GM10248 (cell line): ENCODE measurements at regions of chr11 and their contacts with region 1.

Region 1: GRCh38 chr11:6377902-6378639 is 12.2 kb upstream of the SMPD1 start:
- DNase-seq: no peak
- CTCF ChIP-seq: no peak

Region 2: DNA sequence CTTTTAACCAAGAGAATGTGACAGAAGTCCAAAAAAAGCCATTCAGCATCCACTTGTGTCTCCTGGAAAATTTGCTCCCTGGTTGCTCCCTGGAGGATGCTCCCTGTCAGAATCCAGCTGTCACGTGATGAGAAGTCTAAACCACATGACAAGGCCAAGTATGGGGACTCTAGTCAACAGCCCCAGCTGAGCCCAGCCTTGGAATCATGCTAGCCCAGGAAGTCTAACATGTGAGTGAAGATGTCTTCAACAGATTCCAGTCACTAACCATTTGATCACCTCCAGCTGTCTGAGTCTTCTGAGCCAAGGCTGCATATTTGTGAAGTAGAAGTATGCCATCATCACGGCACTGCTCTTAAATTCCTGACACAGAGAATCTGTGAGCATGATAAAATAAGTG is 266.4 kb before region 1 on chr11:
- CTCF ChIA-PET with region 1: no interaction called
- POLR2A ChIA-PET with region 1: no interaction called
- DNase-seq: no peak
- CTCF ChIP-seq: no peak

Region 3: GRCh38 chr11:6362873-6363678 is 15.0 kb before region 1 on chr11:
- CTCF ChIA-PET with region 1: interaction called, 87 read pairs
- POLR2A ChIA-PET with region 1: no interaction called
- DNase-seq: peak; percentile 78
- CTCF ChIP-seq: peak; percentile 86

Region 4: DNA sequence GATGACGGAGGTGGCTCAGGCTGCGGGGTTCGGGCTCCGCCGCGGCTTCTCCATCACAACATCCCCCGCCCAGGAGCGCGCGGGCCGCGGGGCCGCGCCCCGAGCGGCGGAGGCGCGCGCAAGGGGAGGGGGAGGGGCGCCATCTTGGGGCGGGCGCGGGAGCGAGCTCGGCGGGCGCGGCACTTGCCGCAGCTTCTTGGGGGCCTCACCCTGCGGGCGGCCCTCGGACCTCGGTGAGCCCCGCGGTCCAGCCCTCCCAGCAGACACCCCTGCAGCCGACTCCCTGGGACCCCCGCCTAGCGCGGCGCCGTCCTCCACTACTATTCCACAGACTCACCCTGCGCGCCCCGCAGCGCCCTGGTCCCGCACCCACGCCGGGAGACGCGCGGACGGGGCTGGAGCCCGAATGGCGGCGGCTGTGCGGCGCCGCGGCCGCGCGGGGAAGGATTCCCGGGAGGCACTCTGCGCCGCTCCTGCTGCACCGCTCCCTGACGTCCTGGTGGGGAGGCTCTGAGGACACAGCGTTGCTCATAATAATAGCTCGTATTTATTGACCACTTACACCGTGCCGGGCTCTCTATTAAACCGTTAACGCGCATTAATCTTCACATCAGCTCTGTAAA is 41.0 kb after region 1 on chr11 and contains the start of gene APBB1:
- CTCF ChIA-PET with region 1: interaction called, 25 read pairs
- POLR2A ChIA-PET with region 1: no interaction called
- DNase-seq: peak; percentile 76
- CTCF ChIP-seq: no peak

Region 5: DNA sequence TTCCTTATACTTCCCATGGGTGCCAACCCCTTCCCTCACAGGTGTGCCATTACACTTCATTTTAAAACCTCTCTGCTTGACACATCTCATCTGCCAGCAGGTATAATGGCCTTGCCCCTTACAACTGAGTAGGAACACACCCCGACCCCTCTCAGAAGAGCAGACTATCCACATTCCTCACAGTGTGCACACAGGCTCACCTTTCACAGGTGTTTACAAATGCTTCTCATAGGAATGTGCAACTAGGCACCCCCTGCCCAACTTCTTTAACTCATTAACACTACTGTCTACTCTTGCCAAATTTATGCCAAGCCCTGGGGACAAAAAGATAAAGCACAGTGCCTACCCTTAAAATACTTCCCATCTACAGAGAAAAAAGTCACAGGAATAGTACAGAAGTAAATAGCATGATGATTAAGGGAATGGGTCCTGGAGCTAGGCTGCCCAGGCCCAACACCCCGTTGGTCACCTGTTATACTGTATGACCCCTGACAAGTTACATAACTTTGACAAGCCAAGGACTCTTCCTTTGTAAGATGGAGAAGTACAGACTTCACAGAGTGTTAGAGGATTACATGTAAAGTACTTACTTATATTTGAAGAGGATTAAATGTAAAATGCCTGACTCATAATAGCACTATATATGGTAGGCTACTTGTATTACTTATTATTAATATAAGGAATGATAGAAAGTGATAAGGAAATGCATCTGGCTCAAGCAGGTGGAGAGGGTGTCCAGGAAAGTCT is 80.5 kb after region 1 on chr11:
- CTCF ChIA-PET with region 1: interaction called, 16 read pairs
- POLR2A ChIA-PET with region 1: no interaction called
- DNase-seq: no peak
- CTCF ChIP-seq: no peak

Region 6: DNA sequence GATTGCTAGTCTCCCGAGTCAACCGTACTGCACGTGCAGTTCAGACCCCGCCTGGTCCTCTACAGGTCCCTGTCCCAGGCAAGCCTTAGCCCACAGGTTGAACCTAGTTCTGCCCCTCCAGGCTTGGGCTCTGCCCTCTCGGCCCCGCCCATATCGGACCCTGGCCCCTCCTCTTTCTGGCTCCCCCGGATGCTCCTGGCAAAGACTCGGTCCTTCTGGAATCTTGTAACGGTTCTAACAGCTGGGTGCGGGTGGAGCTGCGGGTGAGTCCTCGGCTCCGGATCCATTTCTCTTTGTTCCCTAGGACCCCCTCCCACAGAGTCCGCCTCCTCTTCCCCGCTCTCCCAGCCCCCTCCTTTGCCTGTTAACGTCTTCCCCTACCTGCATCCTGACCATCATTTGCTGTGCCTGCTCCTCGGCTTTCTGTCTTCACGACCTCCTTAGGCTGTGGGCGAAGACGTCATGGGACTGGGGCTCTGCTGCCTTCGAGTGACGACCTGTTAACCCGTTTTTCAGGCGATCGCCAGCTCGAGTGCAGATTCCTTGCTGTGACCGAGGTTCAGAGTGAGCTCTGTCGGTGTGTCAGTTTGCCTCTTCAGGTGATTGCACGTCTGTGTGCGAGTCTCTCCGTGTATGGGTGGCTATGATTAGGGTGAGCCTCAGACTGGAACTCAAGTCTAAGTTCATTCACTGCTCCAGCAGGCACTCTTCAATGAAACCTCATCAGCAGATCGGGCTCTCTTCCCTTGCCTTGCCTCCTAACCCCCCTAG is 119.2 kb after region 1 on chr11 and contains the start of gene DNHD1:
- CTCF ChIA-PET with region 1: interaction called, 19 read pairs
- POLR2A ChIA-PET with region 1: no interaction called
- DNase-seq: no peak
- CTCF ChIP-seq: no peak

Region 7: DNA sequence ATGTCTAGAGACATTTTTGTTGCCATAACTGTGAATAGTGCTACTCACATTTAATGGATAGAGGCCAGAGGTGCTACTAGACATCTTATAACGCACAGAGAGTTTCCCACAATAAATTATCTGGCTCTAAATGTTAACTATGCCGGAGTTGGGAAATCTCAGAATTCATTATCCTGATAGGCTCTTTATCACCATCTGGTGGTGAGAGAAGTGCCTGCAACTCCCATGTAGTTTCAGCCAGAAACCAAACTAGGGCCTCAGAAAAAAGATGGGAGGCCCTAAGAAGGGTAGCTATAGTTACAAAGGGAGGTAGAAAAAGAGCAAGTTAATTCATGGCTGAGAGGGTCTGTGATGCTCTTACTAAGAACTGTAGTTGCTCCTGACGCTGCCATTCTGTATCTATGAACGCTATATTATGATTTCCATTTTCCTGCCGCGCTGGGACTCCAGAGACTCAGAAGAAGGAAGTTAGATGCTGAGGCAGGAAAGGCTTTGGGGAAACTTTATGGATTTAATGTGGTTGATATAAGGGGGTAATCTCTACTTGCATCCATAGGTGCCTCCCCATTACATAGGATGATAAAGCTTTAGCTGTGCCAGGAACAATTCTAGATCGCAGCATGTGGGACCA is 327.9 kb after region 1 on chr11:
- CTCF ChIA-PET with region 1: interaction called, 51 read pairs
- POLR2A ChIA-PET with region 1: no interaction called
- DNase-seq: peak; percentile 47
- CTCF ChIP-seq: peak; percentile 82